Ascending aorta (tissue), 2 donors: ENCODE measurements at regions of chr7 and their contacts with region 1.

Region 1: DNA sequence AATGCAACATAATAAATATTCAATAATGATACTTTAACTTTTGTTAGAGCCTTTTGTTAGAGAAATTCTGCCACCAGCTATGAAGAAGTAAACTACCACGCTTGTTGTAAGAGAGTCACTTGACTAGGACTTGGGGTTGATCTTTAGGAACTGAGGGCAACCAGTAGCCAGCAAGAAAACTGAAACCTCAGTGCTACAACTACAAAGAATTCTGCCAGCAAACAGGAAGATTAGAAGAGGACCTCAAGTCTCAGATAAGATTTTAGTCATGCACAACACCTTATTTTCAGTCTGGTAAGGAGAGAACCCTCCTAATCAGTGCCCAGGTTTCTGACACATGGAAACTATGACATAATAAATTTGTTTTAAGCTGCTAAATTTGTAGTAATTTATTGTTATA is 498.3 kb upstream of the STEAP1 start:
- DNase-seq: no peak
- H3K4me3 ChIP-seq: no peak overlapping the region
- H3K27ac ChIP-seq: no peak overlapping the region
- H3K4me1 ChIP-seq: no peaks in the 10 kb centered on the region
- H3K27me3 ChIP-seq: no peaks in the 10 kb centered on the region
- CTCF ChIP-seq: no peak

Region 2: GRCh38 chr7:89593125-89593524 is 62.8 kb before region 1 on chr7:
- intact Hi-C with region 1: loop called (anchors 10 kb)
- DNase-seq: no peak
- H3K4me3 ChIP-seq: no peak overlapping the region
- H3K27ac ChIP-seq: no peak overlapping the region
- H3K4me1 ChIP-seq: no peaks in the 10 kb centered on the region
- H3K27me3 ChIP-seq: no peaks in the 10 kb centered on the region
- CTCF ChIP-seq: no peak